Activated CD4-positive, alpha-beta memory T cell treated with anti-CD3 and anti-CD28 coated beads for 36 hours (primary cell): ENCODE measurements at regions of chr20 and their contacts with region 1.

Region 1: GRCh38 chr20:49982346-49983122 is at the start of gene SNAI1:
- DNase-seq: peak; percentile 84
- H3K4me3 Mint-ChIP-seq: peak within 1 kb of the TSS; percentile 23
- H3K27ac Mint-ChIP-seq: no peak within 1 kb of the TSS
- H3K4me1 Mint-ChIP-seq: peaks cover 20% of the 10 kb centered on the region
- H3K27me3 Mint-ChIP-seq: peaks cover 4% of the 10 kb centered on the region
- total RNA-seq, gene SNAI1: 0.27 TPM in 1 of 2 experiments, not detected in the other

Region 2: DNA sequence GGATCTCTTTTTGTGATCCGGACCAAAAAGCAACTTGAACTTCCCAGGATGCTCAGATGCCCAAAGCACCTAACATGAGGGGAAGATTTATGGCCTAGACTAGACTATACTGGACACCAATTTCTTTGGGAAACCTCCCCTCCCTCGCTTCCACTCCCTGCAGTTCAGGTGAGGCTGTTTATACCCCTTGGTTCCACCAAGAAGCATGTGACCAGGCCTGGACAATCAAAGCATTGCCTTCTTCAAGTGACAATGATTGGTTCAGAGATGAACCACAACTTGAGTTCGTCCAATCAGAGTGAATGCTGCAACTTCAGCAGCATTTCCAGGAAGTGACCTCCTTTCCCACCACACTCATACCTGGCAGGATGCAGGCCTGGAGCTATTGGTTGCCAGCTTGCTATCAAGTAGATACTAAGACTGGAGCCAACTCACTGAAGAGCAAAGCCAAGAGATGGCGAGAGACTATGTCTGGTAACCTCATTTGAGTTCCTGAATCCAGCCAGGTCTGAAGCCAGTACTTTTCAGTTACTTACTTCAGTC is 215.5 kb before region 1 on chr20:
- CTCF ChIA-PET with region 1: no interaction called
- POLR2A ChIA-PET with region 1: no interaction called
- intact Hi-C with region 1: no loop called
- DNase-seq: peak; percentile 40
- H3K4me3 Mint-ChIP-seq: no peak overlapping the region
- H3K27ac Mint-ChIP-seq: no peak overlapping the region
- H3K4me1 Mint-ChIP-seq: peaks cover 20% of the 10 kb centered on the region
- H3K27me3 Mint-ChIP-seq: peaks cover 57% of the 10 kb centered on the region

Region 3: GRCh38 chr20:49964964-49965780 is 17.4 kb before region 1 on chr20:
- CTCF ChIA-PET with region 1: interaction called, 13 read pairs
- POLR2A ChIA-PET with region 1: no interaction called
- intact Hi-C with region 1: no loop called
- DNase-seq: peak; percentile 53
- H3K4me3 Mint-ChIP-seq: no peak overlapping the region
- H3K27ac Mint-ChIP-seq: no peak overlapping the region
- H3K4me1 Mint-ChIP-seq: no peaks in the 10 kb centered on the region
- H3K27me3 Mint-ChIP-seq: no peaks in the 10 kb centered on the region

Region 4: DNA sequence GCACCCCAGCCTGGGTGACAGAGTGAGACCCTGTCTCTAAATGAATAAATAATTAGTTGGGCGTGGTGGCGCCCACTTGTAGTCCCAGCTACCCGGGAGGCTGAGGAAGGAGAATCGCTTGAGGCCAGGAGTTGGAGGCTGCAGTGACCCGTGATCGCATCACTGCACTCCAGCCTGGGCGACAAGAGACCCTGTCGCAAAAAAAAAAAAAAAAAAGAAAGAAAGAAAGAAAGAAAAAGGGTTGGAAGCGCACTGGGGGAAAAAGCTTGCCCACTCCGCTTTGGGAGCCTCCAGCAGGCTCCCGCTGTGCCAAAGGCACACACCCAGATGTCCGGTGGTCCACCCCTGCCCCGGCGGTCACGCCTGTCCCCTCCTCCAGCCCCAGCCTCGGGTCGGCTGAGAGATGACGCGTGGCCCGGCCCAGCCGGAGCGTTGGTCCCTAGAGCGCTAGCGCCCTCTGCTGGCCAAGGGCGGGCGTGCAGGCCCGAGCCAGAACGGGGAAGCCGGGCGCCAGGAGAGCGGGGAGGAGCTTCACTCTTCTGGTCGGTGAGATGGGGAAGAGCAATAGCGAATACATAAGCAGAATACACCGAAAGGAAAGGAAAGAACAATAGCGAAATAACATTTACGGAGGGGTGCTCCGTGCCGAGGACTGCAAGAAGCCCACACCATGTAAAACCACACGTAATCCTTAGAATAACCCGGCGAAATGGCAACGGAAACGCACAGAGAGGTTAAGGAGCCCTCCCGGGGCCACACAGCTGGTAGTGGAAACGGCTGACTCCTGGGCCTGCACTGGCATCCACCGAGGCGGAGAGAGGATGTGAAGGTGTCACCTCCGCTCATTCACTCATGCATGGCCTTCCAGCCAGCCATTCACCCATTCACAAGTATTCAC is 88.7 kb after region 1 on chr20:
- CTCF ChIA-PET with region 1: interaction called, 257 read pairs
- POLR2A ChIA-PET with region 1: interaction called, 8 read pairs
- intact Hi-C with region 1: loop called (anchors 1 kb)
- DNase-seq: peak; percentile 94
- H3K4me3 Mint-ChIP-seq: peak overlapping the region; percentile 54
- H3K27ac Mint-ChIP-seq: no peak overlapping the region
- H3K4me1 Mint-ChIP-seq: peaks cover 2% of the 10 kb centered on the region
- H3K27me3 Mint-ChIP-seq: no peaks in the 10 kb centered on the region

Region 5: DNA sequence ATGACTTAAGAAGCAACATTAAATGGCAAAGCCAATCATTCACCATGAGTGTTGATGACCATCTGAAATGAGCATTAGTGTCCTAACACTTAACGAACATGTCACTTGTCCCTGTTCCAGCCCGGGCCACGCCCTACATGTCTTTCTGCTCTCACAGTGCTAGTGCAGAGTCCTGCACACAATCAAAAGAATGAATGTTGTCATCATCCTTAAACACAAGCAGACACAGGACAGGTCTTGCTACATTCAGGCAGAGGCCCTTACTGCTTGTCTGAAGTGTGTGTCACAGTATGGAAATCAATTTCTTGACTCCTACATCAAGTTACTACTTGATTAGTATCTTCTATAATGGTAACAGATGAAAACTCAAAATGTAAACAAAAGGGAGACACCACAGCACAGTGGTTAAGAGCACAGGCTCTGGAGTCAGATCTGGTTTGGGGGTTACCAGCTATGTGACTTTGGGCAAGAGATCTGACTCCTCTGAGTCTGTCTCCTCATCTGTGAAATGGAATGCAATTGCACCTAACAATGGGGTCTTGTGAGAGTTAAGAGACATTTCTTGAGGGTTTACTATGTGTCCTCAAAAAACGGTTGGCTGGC is 113.0 kb after region 1 on chr20:
- CTCF ChIA-PET with region 1: interaction called, 10 read pairs
- POLR2A ChIA-PET with region 1: no interaction called
- intact Hi-C with region 1: no loop called
- DNase-seq: no peak
- H3K4me3 Mint-ChIP-seq: no peak overlapping the region
- H3K27ac Mint-ChIP-seq: peak overlapping the region; percentile 49
- H3K4me1 Mint-ChIP-seq: peaks cover 32% of the 10 kb centered on the region
- H3K27me3 Mint-ChIP-seq: no peaks in the 10 kb centered on the region

Region 6: GRCh38 chr20:50165684-50166554 is 183.4 kb after region 1 on chr20:
- CTCF ChIA-PET with region 1: interaction called, 45 read pairs
- POLR2A ChIA-PET with region 1: no interaction called
- intact Hi-C with region 1: loop called (anchors 1 kb)
- DNase-seq: peak; percentile 95
- H3K4me3 Mint-ChIP-seq: peak overlapping the region; percentile 61
- H3K27ac Mint-ChIP-seq: peak overlapping the region; percentile 84
- H3K4me1 Mint-ChIP-seq: peaks cover 11% of the 10 kb centered on the region
- H3K27me3 Mint-ChIP-seq: peaks cover 2% of the 10 kb centered on the region